CD8-positive, alpha-beta memory T cell (primary cell): ENCODE measurements at regions of chrX and their contacts with region 1.

Region 1: GRCh38 chrX:56281789-56282188 is 49.6 kb downstream of the KLF8 start:
- DNase-seq: peak in 2 of 5 donors; percentile 22 to 36
- H3K4me3 ChIP-seq: no peak overlapping the region
- H3K4me3 Mint-ChIP-seq: no peak overlapping the region
- H3K27ac ChIP-seq: no peak overlapping the region
- H3K27ac Mint-ChIP-seq: no peak overlapping the region
- H3K4me1 ChIP-seq: peaks cover 5% of the 10 kb centered on the region
- H3K4me1 Mint-ChIP-seq: peaks cover 2 to 9% (median 4%) of the 10 kb centered on the region in 3 donors
- H3K27me3 ChIP-seq: no peaks in the 10 kb centered on the region
- H3K27me3 Mint-ChIP-seq: peaks cover 0 to under 1% of the 10 kb centered on the region in 2 donors

Region 2: GRCh38 chrX:56309881-56310280 is 28.1 kb after region 1 on chrX:
- CTCF ChIA-PET with region 1: no interaction called
- POLR2A ChIA-PET with region 1: no interaction called
- DNase-seq: no peak
- H3K4me3 ChIP-seq: no peak overlapping the region
- H3K4me3 Mint-ChIP-seq: no peak overlapping the region
- H3K27ac ChIP-seq: no peak overlapping the region
- H3K27ac Mint-ChIP-seq: no peak overlapping the region
- H3K4me1 ChIP-seq: no peaks in the 10 kb centered on the region
- H3K4me1 Mint-ChIP-seq: peaks cover 4 to 9% (median 5%) of the 10 kb centered on the region in 3 donors
- H3K27me3 ChIP-seq: no peaks in the 10 kb centered on the region
- H3K27me3 Mint-ChIP-seq: peaks cover 5% of the 10 kb centered on the region in 2 donors

Region 3: GRCh38 chrX:56729152-56729850 is 447.5 kb after region 1 on chrX and contains the start of gene NBDY:
- CTCF ChIA-PET with region 1: interaction called, 31 read pairs
- POLR2A ChIA-PET with region 1: no interaction called
- DNase-seq: peak; percentile 1 to 57 (median 33)
- H3K4me3 ChIP-seq: peak within 1 kb of the TSS; percentile 83
- H3K4me3 Mint-ChIP-seq: peak within 1 kb of the TSS; percentile 92 to 94 (median 93)
- H3K27ac ChIP-seq: peak within 1 kb of the TSS; percentile 69
- H3K27ac Mint-ChIP-seq: peak within 1 kb of the TSS; percentile 86 to 97 (median 94)
- H3K4me1 ChIP-seq: peaks cover 12% of the 10 kb centered on the region
- H3K4me1 Mint-ChIP-seq: peaks cover 26 to 51% (median 47%) of the 10 kb centered on the region in 3 donors
- H3K27me3 ChIP-seq: no peaks in the 10 kb centered on the region
- H3K27me3 Mint-ChIP-seq: peaks cover 0 to 9% of the 10 kb centered on the region in 2 donors
- total RNA-seq, gene NBDY: 34.1 to 34.8 TPM